Ascending aorta (tissue), 2 donors: ENCODE measurements at regions of chr7 and their contacts with region 1.

Region 1: DNA sequence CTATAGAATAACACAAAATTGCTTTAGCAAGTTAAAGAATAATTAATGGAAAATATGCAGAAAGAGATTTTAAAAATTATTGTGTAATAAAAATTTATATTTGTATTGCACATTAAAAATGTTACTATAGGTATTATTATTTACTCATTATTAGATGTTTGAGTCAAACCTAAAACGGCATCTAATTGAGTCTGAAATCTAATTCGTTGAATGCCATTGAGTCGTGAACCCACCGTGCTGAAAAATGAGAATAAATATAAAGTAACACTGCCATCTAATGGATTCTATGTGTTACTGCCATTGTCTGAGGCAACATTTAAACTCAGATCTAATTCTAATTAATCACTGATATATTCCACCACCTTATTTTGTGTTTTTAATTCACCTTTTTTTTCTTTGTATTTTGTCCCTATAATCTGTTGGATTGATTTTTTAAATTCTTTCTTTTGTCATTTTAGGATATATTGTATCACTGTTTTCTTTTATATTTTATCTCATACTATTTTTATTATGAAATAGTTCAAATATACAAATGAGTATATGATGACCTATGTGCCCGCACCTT is 62.2 kb downstream of the SAMD9 start:
- DNase-seq: no peak
- H3K4me3 ChIP-seq: no peak overlapping the region
- H3K27ac ChIP-seq: no peak overlapping the region
- H3K4me1 ChIP-seq: no peaks in the 10 kb centered on the region
- H3K27me3 ChIP-seq: no peaks in the 10 kb centered on the region
- CTCF ChIP-seq: peak; percentile 66 to 79 (median 74)

Region 2: DNA sequence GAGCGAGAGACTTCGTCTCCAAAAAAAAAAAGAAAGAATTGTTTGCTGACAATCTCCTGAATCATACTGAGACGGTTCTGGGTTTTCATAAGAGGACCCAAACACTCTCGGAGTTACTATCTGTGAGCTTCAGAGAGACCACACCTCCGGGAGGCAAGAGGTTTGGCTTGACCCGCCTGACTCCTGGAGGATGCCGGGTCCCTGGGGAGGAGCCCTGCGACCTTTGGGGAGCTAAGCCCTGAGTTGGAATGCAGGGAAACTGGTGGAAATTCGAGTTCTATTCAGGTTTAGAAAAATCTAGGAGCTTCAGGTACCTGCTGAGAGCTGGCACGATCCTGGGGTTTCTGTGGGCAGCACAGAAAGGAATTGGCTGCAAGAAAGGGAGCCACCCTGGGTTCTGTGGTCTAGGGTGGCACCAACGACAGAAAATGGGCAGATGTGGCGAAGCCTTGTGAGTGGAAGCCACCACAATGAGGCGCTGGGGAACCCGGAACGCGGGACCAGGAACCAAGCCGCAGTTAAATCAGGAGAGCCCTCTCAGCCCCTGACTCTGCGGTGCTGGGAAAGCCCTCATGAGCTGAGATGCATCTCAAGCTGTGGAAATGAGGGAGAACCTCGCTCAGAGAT is 630.2 kb before region 1 on chr7:
- intact Hi-C with region 1: loop called (anchors 2 kb)
- DNase-seq: no peak
- H3K4me3 ChIP-seq: peak overlapping the region in 1 of 2 donors; percentile 69
- H3K27ac ChIP-seq: no peak overlapping the region
- H3K4me1 ChIP-seq: no peaks in the 10 kb centered on the region
- H3K27me3 ChIP-seq: no peaks in the 10 kb centered on the region
- CTCF ChIP-seq: no peak

Region 3: GRCh38 chr7:92590711-92591310 is 464.8 kb before region 1 on chr7:
- intact Hi-C with region 1: loop called (anchors 5 kb)
- DNase-seq: no peak
- H3K4me3 ChIP-seq: peak overlapping the region; percentile 84 to 92
- H3K27ac ChIP-seq: no peak overlapping the region
- H3K4me1 ChIP-seq: peaks cover 0 to 20% of the 10 kb centered on the region in 2 donors
- H3K27me3 ChIP-seq: no peaks in the 10 kb centered on the region
- CTCF ChIP-seq: no peak

Region 4: DNA sequence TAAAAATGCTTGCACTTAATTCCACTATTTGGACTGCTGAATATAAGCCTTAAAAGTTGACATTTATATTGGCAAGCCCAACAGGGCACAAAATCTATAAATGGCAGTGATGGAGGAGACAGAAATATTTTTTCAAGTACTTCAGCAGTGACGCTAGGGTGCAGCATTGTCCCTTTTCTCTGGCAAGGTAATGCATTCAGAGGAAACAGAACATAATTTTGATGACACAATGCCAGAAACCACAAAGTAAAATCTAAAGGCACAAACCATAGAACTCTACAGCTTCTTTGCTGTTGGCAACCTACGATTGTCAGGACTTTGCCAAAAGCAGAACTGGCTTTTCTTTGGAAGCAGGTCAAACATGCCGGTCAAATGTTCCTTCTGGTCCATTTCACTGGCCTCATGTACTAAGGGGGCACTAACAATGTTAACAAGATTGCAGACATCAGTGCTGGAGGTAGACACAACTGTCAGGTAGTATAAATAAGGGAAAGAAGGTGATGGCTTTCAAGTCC is 434.5 kb before region 1 on chr7:
- intact Hi-C with region 1: loop called (anchors 2 kb)
- DNase-seq: peak in 1 of 2 donors; percentile 73
- H3K4me3 ChIP-seq: no peak overlapping the region
- H3K27ac ChIP-seq: peak overlapping the region; percentile 68 to 76
- H3K4me1 ChIP-seq: peaks cover 0 to 9% of the 10 kb centered on the region in 2 donors
- H3K27me3 ChIP-seq: no peaks in the 10 kb centered on the region
- CTCF ChIP-seq: peak; percentile 78 to 83 (median 80)

Region 5: GRCh38 chr7:93092757-93093370 is 37.2 kb after region 1 on chr7:
- intact Hi-C with region 1: no loop called
- DNase-seq: no peak
- H3K4me3 ChIP-seq: no peak overlapping the region
- H3K27ac ChIP-seq: no peak overlapping the region
- H3K4me1 ChIP-seq: no peaks in the 10 kb centered on the region
- H3K27me3 ChIP-seq: no peaks in the 10 kb centered on the region
- CTCF ChIP-seq: no peak